CD4-positive, alpha-beta T cell (primary cell): ENCODE measurements at regions of chr9 and their contacts with region 1.

Region 1: DNA sequence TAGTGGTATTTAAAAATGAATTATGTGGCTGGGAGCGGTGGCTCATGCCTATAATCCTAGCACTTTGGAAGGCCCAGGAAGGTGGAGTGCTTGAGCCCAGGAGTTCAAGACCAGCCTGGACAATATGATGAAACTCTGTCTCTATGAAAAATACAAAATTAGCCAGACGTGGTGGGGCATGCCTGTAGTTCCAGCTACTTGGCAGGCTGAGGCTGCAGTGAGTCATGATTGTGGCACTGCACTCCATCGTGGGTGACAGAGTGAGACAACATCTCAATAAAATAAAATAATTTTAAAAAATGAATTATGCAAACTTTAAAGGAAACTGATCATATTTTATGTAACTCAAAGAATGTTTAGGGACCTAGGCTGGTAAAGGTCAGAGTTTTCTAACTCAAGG is 310.8 kb upstream of the DMRT1 start:
- DNase-seq: no peak
- ATAC-seq: no peak
- H3K4me3 ChIP-seq: no peak overlapping the region
- H3K4me3 Mint-ChIP-seq: no peak overlapping the region
- H3K27ac ChIP-seq: no peak overlapping the region
- H3K27ac Mint-ChIP-seq: no peak overlapping the region
- H3K4me1 ChIP-seq: no peaks in the 10 kb centered on the region
- H3K4me1 Mint-ChIP-seq: no peaks in the 10 kb centered on the region
- H3K27me3 ChIP-seq: no peaks in the 10 kb centered on the region
- H3K27me3 Mint-ChIP-seq: peaks cover 5% of the 10 kb centered on the region
- CTCF ChIP-seq: no peak

Region 2: DNA sequence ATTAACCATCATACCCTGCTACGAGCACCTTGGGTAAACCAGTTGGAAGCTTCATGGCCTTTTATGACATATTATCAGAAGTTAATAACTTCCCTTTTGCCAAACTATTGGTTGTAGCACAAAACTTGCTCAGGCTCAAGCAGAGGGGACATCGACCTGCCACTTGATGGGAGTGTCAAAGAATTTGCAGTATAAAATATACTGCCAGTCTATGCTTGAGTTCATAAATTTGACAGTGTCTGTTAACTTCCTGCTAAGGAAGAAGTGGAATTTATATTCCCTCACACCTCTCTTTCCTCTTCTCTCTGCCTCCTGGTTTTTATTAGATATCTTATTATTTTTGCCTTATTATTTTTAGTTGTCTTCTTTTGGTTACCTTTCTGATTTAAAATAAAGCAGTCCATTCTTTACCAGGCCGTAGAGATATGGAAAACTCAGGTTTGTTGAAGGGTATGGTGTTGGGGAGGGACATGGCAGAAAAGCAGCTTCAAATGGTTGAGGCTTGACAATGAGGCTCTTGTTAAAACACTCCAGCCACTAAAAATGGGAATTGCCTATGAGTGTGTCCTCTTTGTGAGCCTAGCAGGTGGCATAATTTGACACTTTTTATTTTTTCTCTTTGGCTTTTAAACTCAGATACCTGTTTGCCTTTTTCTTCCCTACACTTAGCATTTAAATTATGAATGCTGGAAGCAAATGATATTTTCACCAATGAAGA is 18.0 kb before region 1 on chr9:
- CTCF ChIA-PET with region 1: interaction called, 3 read pairs
- POLR2A ChIA-PET with region 1: interaction called, 3 read pairs
- intact Hi-C with region 1: loop called (anchors 1 kb)
- DNase-seq: no peak
- ATAC-seq: no peak
- H3K4me3 ChIP-seq: no peak overlapping the region
- H3K4me3 Mint-ChIP-seq: no peak overlapping the region
- H3K27ac ChIP-seq: no peak overlapping the region
- H3K27ac Mint-ChIP-seq: no peak overlapping the region
- H3K4me1 ChIP-seq: peaks cover 18% of the 10 kb centered on the region
- H3K4me1 Mint-ChIP-seq: peaks cover 20% of the 10 kb centered on the region
- H3K27me3 ChIP-seq: no peaks in the 10 kb centered on the region
- H3K27me3 Mint-ChIP-seq: peaks cover 5% of the 10 kb centered on the region
- CTCF ChIP-seq: no peak

Region 3: DNA sequence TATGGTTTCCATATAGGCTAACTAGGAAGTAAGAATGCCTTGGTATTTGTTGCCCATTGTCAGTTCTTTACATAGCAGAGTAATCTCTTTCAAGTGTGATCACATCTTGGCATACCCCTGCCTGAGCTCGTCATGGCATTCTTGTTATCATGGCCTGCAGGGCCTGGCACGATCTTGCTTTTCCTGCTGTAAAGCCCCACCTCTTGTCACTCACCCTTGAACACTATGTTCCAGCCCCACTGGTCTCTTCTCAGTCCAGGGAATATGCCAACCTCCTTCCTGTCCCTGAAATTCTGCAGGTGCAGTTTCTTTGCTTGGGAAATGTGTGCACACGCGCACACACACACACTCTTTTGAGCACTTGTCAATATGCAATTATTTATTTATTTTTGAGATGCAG is 60.6 kb after region 1 on chr9:
- CTCF ChIA-PET with region 1: no interaction called
- POLR2A ChIA-PET with region 1: no interaction called
- intact Hi-C with region 1: no loop called
- DNase-seq: no peak
- ATAC-seq: no peak
- H3K4me3 ChIP-seq: no peak overlapping the region
- H3K4me3 Mint-ChIP-seq: no peak overlapping the region
- H3K27ac ChIP-seq: no peak overlapping the region
- H3K27ac Mint-ChIP-seq: no peak overlapping the region
- H3K4me1 ChIP-seq: no peaks in the 10 kb centered on the region
- H3K4me1 Mint-ChIP-seq: no peaks in the 10 kb centered on the region
- H3K27me3 ChIP-seq: no peaks in the 10 kb centered on the region
- H3K27me3 Mint-ChIP-seq: no peaks in the 10 kb centered on the region
- CTCF ChIP-seq: no peak